Sigmoid colon (tissue), 7 donors: ENCODE measurements at regions of chr5 and their contacts with region 1.

Region 1: GRCh38 chr5:1799602-1800471 is at the start of gene MRPL36:
- DNase-seq: peak; percentile 96
- H3K4me3 ChIP-seq: peak within 1 kb of the TSS; percentile 63 to 95 (median 84)
- H3K27ac ChIP-seq: peak within 1 kb of the TSS; percentile 81 to 87 (median 85)
- H3K4me1 ChIP-seq: peaks cover 0 to 34% (median 34%) of the 10 kb centered on the region in 4 donors
- H3K27me3 ChIP-seq: no peaks in the 10 kb centered on the region
- CTCF ChIP-seq: no peak
- EP300 ChIP-seq: no peak
- POLR2A ChIP-seq: peak; percentile 64 to 73
- total RNA-seq, gene MRPL36: 32.4 to 59.4 (median 49.2) TPM

Region 2: DNA sequence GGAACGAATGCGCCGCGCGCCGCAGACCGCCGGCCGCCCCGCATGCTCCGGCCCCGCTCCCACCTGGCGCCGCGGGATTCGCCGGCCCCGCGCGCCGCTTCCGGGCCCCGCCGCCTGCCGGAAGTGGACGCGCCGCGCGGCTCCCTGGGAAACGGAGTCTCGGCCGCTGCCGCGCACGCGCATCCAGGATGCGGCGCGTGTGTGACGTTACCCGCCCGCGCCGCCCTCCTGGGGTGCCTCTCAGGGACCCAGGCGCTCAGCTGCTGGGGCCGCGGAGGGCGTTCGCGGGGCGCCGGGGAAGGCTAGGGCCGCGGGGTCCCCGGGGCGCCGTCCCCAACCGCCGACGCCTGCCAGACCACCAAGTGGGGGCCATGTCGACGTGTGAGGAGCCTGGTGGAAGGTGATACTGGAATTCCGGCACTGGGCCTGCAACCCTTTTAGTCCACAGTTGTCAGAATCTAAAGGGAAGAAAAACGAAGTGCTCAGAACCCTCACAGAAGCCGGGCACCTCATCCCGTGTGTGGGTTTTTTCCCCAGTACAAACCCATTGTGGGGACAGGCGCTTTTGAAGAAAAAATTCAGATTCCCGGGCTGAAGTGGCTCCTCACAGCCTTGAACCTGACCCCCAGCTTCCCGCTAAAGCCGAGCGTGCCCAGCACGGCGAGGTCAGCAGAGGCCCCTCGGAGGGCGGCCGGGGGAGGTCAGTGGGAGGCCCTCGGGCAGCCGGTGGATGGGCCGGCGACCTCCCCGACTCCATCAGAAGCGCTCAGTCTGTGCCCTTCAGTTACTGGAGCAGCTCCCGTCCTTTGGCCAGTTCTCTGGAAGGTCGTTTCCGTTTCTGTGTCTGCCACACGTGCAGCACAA is 454.6 kb before region 1 on chr5 and contains the start of gene CLPTM1L:
- intact Hi-C with region 1: loop called (anchors 2 kb)
- DNase-seq: peak; percentile 92
- H3K4me3 ChIP-seq: peak within 1 kb of the TSS; percentile 71 to 99 (median 86)
- H3K27ac ChIP-seq: peak within 1 kb of the TSS; percentile 83 to 94 (median 90)
- H3K4me1 ChIP-seq: peaks cover 0 to 33% (median 23%) of the 10 kb centered on the region in 4 donors
- H3K27me3 ChIP-seq: no peaks in the 10 kb centered on the region
- CTCF ChIP-seq: no peak
- EP300 ChIP-seq: no peak
- POLR2A ChIP-seq: peak; percentile 62 to 63
- total RNA-seq, gene CLPTM1L: 49.5 to 67.8 (median 58.9) TPM